Left cardiac atrium (tissue), 4 donors: ENCODE measurements at regions of chr3 and their contacts with region 1.

Region 1: DNA sequence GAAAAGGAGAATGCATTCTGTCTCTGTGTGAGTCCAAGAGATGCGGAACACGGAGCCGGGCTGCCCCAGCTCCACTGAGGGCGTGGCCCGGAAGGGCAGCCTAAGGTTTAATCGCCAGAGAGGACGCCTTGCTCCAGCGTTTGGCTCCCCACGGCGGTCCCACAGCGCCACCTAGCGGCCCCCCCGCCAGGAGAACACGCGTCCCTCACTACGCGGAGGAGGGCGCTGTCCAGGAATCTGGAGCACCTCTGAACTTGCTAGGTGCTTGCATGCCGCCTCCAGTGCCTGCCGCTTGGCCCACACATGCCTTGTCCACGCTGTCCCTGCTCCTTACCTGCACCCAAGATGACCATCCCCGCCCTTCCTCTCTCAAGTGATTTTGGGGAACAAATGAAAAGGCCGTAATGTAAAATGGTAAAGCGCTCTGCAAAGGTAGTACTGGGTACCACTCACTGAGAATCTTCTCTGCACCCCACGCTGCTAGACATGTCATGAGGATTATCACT is 14.4 kb upstream of the MRPS22 start:
- DNase-seq: peak; percentile 88
- ATAC-seq: peak; percentile 96 to 99

Region 2: GRCh38 chr3:138935848-138936740 is 393.3 kb before region 1 on chr3:
- intact Hi-C with region 1: loop called (anchors 2 to 5 kb)
- DNase-seq: peak; percentile 82
- ATAC-seq: peak; percentile 77 to 81

Region 3: GRCh38 chr3:139111392-139112229 is 217.8 kb before region 1 on chr3:
- intact Hi-C with region 1: loop called (anchors 2 kb)
- DNase-seq: peak; percentile 63
- ATAC-seq: peak; percentile 83 to 87

Region 4: GRCh38 chr3:139267300-139268246 is 61.8 kb before region 1 on chr3:
- intact Hi-C with region 1: no loop called
- DNase-seq: no peak
- ATAC-seq: peak; percentile 76 to 90

Region 5: DNA sequence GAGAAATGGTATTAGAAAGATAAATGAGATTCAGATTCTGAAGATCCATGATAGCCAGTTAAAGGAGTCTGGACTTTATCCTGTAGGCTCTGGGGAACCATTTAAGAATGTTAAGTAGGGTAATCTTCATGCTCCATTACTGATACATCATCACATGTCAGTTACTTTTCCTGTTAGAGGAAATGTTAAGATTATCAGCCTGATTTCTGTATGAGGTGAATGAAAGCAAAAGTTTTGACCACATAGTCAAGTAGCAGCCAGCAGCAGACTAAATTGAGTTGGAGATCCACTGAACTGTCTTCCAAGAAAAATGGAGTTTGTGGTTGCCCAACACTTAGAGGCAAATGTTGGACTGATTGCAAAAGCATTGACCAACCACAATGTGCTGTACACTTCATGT is 64.7 kb after region 1 on chr3:
- intact Hi-C with region 1: no loop called
- DNase-seq: no peak
- ATAC-seq: no peak

Region 6: GRCh38 chr3:139506766-139507165 is 177.4 kb after region 1 on chr3:
- intact Hi-C with region 1: no loop called
- DNase-seq: no peak
- ATAC-seq: no peak